ENCODE measurements at regions of chr17 and their contacts with region 1.

Region 1: GRCh38 chr17:32253117-32253611 is 12.5 kb upstream of the RHBDL3 start:
- H3K4me3 ChIP-seq: no peak overlapping the region
- H3K27ac ChIP-seq: no peak overlapping the region
- H3K4me1 ChIP-seq: no peaks in the 10 kb centered on the region
- CTCF ChIP-seq: peak; percentile 90

Region 2: GRCh38 chr17:32227910-32228309 is 25.3 kb before region 1 on chr17:
- CTCF ChIA-PET with region 1: interaction called, 11 read pairs
- POLR2A ChIA-PET with region 1: no interaction called
- H3K4me3 ChIP-seq: no peak overlapping the region
- H3K27ac ChIP-seq: no peak overlapping the region
- H3K4me1 ChIP-seq: no peaks in the 10 kb centered on the region
- CTCF ChIP-seq: no peak

Region 3: DNA sequence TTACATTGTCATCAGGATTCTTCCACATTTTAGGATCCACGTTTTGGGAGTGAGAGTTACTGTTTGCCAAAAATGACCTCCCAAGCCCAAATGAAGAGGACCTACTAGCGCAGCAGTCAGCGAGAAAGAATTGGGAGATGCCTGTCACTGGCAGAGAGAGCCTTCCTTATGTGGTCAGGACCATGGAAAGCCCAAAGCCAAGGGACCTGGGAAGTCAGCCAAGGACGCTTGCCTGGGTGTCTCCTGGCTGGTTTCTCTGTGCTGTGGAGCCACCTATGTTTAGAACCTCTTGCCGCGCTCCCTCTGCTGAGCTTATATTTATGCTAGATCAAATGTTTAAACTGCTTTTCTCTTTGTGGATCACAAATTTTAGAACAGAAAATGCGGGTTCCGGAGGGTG is 12.4 kb before region 1 on chr17:
- CTCF ChIA-PET with region 1: interaction called, 13 read pairs
- POLR2A ChIA-PET with region 1: no interaction called
- H3K4me3 ChIP-seq: no peak overlapping the region
- H3K27ac ChIP-seq: no peak overlapping the region
- H3K4me1 ChIP-seq: no peaks in the 10 kb centered on the region
- CTCF ChIP-seq: no peak

Region 4: DNA sequence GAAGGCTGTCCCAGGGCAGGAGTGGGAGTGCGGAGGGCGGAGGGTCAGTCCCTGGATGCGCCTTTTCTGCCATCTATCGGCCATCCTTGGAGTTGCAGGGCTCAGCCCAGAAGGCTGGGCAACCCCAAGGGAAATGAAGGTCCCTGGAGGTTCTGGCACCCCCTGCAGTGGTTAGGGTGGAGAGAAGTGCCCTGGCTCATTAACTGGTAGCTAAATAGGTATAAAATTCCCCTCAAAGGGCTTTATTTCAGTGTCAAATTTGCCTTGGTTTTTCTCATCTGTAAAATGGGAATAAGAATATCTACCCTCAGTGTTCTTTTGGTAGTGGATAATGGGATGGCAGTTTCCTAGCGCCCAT is 66.4 kb after region 1 on chr17:
- CTCF ChIA-PET with region 1: interaction called, 95 read pairs
- POLR2A ChIA-PET with region 1: interaction called, 4 read pairs
- H3K4me3 ChIP-seq: no peak overlapping the region
- H3K27ac ChIP-seq: no peak overlapping the region
- H3K4me1 ChIP-seq: no peaks in the 10 kb centered on the region
- CTCF ChIP-seq: peak; percentile 84